Sciatic nerve (tissue), 2 donors: ENCODE measurements at regions of chrX and their contacts with region 1.

Region 1: DNA sequence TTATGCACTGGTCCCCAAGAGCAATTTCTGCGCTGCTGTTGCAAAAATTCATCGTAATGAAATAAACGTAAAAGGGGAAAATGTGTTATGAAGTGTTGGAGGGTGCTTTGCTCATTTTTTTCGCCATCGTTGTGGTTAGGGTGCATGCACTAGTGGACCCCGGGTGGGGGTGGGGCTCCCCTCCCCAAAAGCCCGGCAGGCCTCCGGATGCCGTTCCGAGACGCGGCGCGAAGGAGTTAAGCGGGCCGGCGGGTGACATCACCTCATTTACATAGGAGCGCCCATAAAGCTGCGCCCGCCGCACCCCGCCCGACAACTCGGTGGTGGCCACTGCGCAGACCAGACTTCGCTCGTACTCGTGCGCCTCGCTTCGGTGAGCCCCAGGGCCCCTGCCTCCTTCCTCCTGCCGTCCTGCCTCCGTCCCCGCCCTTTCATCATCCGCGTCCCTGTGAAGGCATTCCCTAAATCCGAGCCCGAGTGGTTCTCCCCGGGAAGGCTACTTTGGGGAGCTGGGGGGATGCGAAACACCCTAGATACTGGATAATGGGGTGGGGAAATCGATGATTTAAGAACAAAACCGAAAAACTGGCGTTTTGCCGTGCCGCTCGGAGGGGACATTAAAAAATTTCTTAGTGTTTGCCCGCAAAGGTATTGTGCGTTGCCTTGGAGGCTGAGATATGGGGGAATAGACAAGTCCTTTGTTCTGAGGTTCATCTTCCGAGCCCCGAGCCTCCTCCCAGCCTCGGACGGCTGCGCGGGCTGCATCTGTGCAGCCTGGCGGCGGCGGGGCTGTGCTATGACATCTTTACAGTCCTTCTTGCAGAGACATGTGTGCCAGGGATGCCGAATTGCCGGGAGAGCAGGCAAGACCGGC is at the start of gene TMSB4X:
- DNase-seq: peak; percentile 93
- ATAC-seq: peak; percentile 92
- total RNA-seq, gene TMSB4X: 3,078 TPM

Region 2: GRCh38 chrX:11406109-11406765 is 1568.8 kb before region 1 on chrX:
- intact Hi-C with region 1: no loop called
- DNase-seq: no peak
- ATAC-seq: no peak

Region 3: GRCh38 chrX:12758292-12758691 is 216.7 kb before region 1 on chrX:
- intact Hi-C with region 1: no loop called
- DNase-seq: no peak
- ATAC-seq: no peak

Region 4: DNA sequence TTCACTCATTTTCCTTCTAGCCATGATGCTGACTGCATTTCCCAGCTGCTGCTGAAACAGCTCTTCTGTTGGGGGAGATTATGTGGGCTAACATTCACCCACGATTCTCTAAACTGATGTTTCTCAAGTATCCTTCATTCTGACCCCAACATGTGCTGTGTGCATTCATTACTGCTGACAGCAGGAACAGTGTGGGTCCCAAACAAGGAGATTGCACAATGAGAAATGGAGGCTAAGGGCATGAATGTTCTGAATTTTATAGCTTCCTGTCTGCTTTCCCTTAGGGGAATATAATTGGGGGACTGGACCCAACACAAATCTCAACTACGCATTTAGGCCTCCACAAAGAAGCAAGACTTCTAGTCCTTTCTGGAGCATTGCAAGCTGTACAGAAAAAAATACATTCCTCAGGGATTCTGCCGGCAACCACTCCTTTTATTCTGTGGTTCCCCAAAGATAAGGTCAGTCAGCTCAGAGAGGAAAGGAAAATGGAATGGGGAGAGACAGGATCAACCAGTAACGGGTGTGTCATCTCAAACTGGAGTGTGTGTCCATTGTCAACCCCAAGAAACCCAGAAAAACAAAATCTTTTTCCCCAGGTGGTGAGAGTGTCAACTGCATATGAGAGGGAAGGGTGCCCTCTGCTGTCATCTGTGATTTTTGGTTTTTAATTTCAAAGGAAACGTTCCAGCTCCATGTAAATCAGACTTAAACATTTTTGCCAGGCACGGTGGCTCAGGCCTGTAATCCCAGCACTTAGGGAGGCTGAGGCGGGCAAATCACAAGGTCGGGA is 512.9 kb after region 1 on chrX:
- intact Hi-C with region 1: loop called (anchors 10 kb)
- DNase-seq: no peak
- ATAC-seq: peak; percentile 77